PC-9 (cell line): ENCODE measurements at regions of chr1 and their contacts with region 1.

Region 1: GRCh38 chr1:205493241-205494085 is 11.0 kb upstream of the CDK18 start:
- DNase-seq: peak; percentile 63 to 66
- H3K4me3 ChIP-seq: no peak overlapping the region
- H3K27ac ChIP-seq: no peak overlapping the region
- H3K4me1 ChIP-seq: peaks cover 20% of the 10 kb centered on the region
- H3K27me3 ChIP-seq: no peaks in the 10 kb centered on the region
- CTCF ChIP-seq: no peak

Region 2: DNA sequence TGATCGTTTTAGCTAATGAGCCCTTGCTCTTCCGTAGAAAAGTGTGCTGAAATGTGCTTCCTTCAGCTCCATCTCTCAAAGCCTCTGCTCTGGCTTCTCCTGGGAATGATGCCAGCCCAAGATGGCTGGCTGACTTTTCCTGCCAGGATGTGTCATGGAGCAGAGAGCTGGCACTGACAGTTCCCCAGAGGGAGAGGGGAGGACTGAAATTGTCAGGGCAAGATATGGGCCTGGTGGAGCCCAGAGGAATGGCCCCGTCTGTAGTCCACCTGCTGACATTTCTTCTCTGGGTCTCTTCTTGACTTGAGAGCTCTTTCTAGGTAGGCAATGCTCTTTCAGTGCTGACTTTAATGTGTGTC is 1108.5 kb before region 1 on chr1:
- CTCF ChIA-PET with region 1: interaction called, 12 read pairs
- POLR2A ChIA-PET with region 1: no interaction called
- intact Hi-C with region 1: no loop called
- DNase-seq: no peak
- H3K4me3 ChIP-seq: no peak overlapping the region
- H3K27ac ChIP-seq: no peak overlapping the region
- H3K4me1 ChIP-seq: peaks cover 18% of the 10 kb centered on the region
- H3K27me3 ChIP-seq: no peaks in the 10 kb centered on the region
- CTCF ChIP-seq: no peak

Region 3: GRCh38 chr1:205504311-205504984 is 11.0 kb after region 1 on chr1 and contains the start of gene CDK18:
- CTCF ChIA-PET with region 1: interaction called, 3 read pairs
- POLR2A ChIA-PET with region 1: no interaction called
- intact Hi-C with region 1: loop called (anchors 1 kb)
- DNase-seq: peak; percentile 71 to 78
- H3K4me3 ChIP-seq: peak within 1 kb of the TSS; percentile 88
- H3K27ac ChIP-seq: peak within 1 kb of the TSS; percentile 31
- H3K4me1 ChIP-seq: peaks cover 14% of the 10 kb centered on the region
- H3K27me3 ChIP-seq: no peaks in the 10 kb centered on the region
- CTCF ChIP-seq: no peak
- total RNA-seq, gene CDK18: 35.3 and 36.2 TPM in 2 replicates

Region 4: GRCh38 chr1:205512059-205513045 is 18.9 kb after region 1 on chr1:
- CTCF ChIA-PET with region 1: no interaction called
- POLR2A ChIA-PET with region 1: no interaction called
- intact Hi-C with region 1: loop called (anchors 2 kb)
- DNase-seq: no peak
- H3K4me3 ChIP-seq: no peak overlapping the region
- H3K27ac ChIP-seq: no peak overlapping the region
- H3K4me1 ChIP-seq: peaks cover 8% of the 10 kb centered on the region
- H3K27me3 ChIP-seq: no peaks in the 10 kb centered on the region
- CTCF ChIP-seq: no peak